ENCODE measurements at regions of chr17 and their contacts with region 1.

Region 1: GRCh38 chr17:45277216-45277849 is 15.4 kb upstream of the SPATA32 start:
- DNase-seq: peak; percentile 74 to 98 (median 90)

Region 2: GRCh38 chr17:45317112-45317928 is 40.0 kb after region 1 on chr17:
- intact Hi-C with region 1: loop called (anchors 1 kb)
- DNase-seq: peak; percentile 98 to 100 (median 99)

Region 3: DNA sequence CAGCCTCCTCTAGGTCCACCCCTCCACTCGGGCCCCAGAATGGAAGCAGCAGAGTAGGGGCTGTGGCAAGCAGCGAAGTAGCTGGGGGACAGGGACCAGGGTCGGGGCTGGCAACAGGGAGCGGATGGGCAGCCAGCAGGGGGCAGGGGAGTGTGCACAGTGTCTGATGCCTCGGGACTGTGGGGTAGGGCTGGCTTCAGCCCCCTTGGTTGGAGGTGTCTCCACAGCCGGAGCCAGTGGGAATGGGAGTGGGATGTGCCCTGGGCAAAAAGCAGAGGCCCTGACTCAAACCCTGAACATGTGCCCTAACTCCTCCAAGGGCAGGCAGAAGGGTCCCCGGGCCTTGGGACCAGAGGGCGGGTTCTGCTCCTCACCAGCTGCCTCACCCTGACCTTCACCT is 173.8 kb after region 1 on chr17:
- intact Hi-C with region 1: no loop called
- DNase-seq: peak in 1 of 10 donors; percentile 67

Measured in posterior cingulate gyrus (tissue), 11 donors.